Endothelial cell of umbilical vein (primary cell): ENCODE measurements at regions of chr4 and their contacts with region 1.

Region 1: GRCh38 chr4:110586131-110586850 is 36.6 kb downstream of the PITX2 start:
- DNase-seq: peak; percentile 64
- H3K4me3 ChIP-seq: peak overlapping the region in 1 of 3 experiments; percentile 40
- H3K27ac ChIP-seq: no peak overlapping the region
- H3K4me1 ChIP-seq: no peaks in the 10 kb centered on the region
- H3K27me3 ChIP-seq: no peaks in the 10 kb centered on the region
- CTCF ChIP-seq: peak; percentile 43 to 47
- POLR2A ChIP-seq: no peak

Region 2: DNA sequence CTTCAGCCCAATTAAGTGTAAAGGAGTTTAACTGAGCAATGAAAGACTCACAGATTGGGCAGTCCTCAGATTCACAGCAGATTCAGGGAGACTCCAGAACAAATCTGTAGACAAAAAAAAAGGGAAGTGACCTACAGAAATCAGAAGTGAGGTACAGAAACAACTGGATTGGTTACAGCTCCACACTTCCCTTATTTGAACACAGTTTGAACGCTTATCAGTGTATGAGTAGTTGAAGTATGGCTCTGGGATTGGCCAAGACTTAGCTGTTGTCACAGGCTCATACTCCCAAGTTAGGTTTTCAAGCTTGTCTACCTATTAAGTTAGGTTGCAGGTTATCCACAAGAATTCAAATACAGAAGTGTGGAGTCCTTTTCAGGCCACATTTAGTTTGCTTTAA is 275.5 kb before region 1 on chr4:
- CTCF ChIA-PET with region 1: interaction called, 8 read pairs
- POLR2A ChIA-PET with region 1: no interaction called
- dilution Hi-C with region 1: no loop called
- intact Hi-C with region 1: loop called (anchors 1 kb)
- DNase-seq: no peak
- H3K4me3 ChIP-seq: no peak overlapping the region
- H3K27ac ChIP-seq: no peak overlapping the region
- H3K4me1 ChIP-seq: no peaks in the 10 kb centered on the region
- H3K27me3 ChIP-seq: no peaks in the 10 kb centered on the region
- CTCF ChIP-seq: no peak
- POLR2A ChIP-seq: no peak

Region 3: GRCh38 chr4:110516106-110516922 is 70.0 kb before region 1 on chr4:
- CTCF ChIA-PET with region 1: interaction called, 48 read pairs
- POLR2A ChIA-PET with region 1: no interaction called
- dilution Hi-C with region 1: no loop called
- intact Hi-C with region 1: loop called (anchors 1 kb)
- DNase-seq: peak; percentile 86
- H3K4me3 ChIP-seq: peak overlapping the region; percentile 56 to 95 (median 79)
- H3K27ac ChIP-seq: peak overlapping the region; percentile 49
- H3K4me1 ChIP-seq: peaks cover 10% of the 10 kb centered on the region
- H3K27me3 ChIP-seq: peaks cover 0 to 4% of the 10 kb centered on the region in 2 experiments
- CTCF ChIP-seq: peak; percentile 80 to 82
- POLR2A ChIP-seq: no peak

Region 4: DNA sequence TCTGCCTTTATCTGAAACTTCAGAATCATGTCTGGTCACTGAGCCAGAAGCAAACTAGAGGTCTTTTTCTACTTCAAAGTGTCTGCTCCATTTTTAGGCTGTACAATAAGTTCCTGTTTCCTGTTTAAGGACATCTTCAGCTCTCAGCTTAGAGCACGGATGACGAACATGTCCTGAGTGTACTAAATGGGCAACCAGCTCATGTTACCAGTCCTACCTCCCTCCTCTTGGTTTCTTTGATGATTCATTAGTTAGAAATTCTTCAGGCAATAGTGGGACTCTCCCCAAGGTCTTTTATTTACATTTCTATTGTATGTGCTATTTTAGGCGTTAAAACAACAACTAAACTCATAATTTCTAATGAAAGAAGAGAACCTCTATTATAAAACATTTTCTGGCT is 52.4 kb before region 1 on chr4:
- CTCF ChIA-PET with region 1: interaction called, 22 read pairs
- POLR2A ChIA-PET with region 1: no interaction called
- dilution Hi-C with region 1: no loop called
- intact Hi-C with region 1: loop called (anchors 1 kb)
- DNase-seq: peak; percentile 94
- H3K4me3 ChIP-seq: peak overlapping the region in 1 of 3 experiments; percentile 54
- H3K27ac ChIP-seq: peak overlapping the region; percentile 94
- H3K4me1 ChIP-seq: peaks cover 38% of the 10 kb centered on the region
- H3K27me3 ChIP-seq: no peaks in the 10 kb centered on the region
- CTCF ChIP-seq: no peak
- POLR2A ChIP-seq: no peak

Region 5: DNA sequence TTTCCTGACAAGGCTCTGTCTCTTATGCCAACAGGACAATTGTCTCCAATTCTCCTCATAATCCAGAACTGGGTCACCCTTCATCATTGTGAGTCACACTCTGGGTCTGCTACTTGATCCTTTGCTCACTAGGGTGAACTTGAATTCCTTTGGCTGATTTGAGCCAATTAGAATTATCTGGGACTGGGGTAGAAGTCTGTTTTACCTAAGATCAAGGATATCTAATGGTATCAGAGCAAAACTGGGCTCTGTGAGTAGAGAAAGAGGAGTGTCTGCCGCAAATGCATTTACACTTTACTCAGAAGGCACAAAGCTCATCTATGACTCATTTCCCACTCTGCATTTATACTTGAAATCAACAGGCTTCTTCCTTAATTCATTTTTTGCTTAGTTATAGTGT is 36.0 kb before region 1 on chr4:
- CTCF ChIA-PET with region 1: interaction called, 12 read pairs
- POLR2A ChIA-PET with region 1: no interaction called
- dilution Hi-C with region 1: no loop called
- intact Hi-C with region 1: no loop called
- DNase-seq: peak; percentile 66
- H3K4me3 ChIP-seq: no peak overlapping the region
- H3K27ac ChIP-seq: peak overlapping the region; percentile 63
- H3K4me1 ChIP-seq: peaks cover 13% of the 10 kb centered on the region
- H3K27me3 ChIP-seq: no peaks in the 10 kb centered on the region
- CTCF ChIP-seq: no peak
- POLR2A ChIP-seq: no peak

Region 6: DNA sequence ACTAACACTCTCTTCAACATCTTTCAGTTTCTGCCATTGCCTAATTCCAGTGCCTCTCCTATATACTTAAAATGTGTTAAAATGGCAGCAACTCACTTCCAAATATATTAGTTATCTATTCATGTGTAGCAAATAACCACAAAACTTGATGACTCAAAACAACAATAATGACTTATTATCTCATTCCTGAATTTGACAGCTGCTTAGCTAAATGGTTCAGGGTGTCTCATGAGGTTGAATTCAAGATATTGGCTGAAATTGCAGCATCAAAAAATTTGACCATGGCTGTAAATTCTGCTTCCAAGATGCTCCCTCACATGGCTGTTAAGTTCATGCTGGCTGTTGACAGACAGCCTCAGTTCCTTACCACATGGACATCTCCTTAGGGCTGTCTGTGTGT is 11.3 kb after region 1 on chr4:
- CTCF ChIA-PET with region 1: interaction called, 12 read pairs
- POLR2A ChIA-PET with region 1: no interaction called
- dilution Hi-C with region 1: no loop called
- intact Hi-C with region 1: no loop called
- DNase-seq: no peak
- H3K4me3 ChIP-seq: no peak overlapping the region
- H3K27ac ChIP-seq: no peak overlapping the region
- H3K4me1 ChIP-seq: no peaks in the 10 kb centered on the region
- H3K27me3 ChIP-seq: peaks cover under 1 to 32% of the 10 kb centered on the region in 2 experiments
- CTCF ChIP-seq: no peak
- POLR2A ChIP-seq: no peak